Heart left ventricle (tissue), 16 donors: ENCODE measurements at regions of chr13 and their contacts with region 1.

Region 1: GRCh38 chr13:73293902-73294523 is 235.2 kb downstream of the KLF5 start:
- DNase-seq: no peak
- ATAC-seq: no peak
- H3K4me3 ChIP-seq: no peak overlapping the region
- H3K27ac ChIP-seq: no peak overlapping the region
- H3K4me1 ChIP-seq: no peaks in the 10 kb centered on the region
- H3K27me3 ChIP-seq: no peaks in the 10 kb centered on the region
- CTCF ChIP-seq: no peak
- POLR2A ChIP-seq: no peak

Region 2: GRCh38 chr13:73096181-73097117 is 197.6 kb before region 1 on chr13:
- intact Hi-C with region 1: no loop called
- DNase-seq: no peak
- ATAC-seq: no peak
- H3K4me3 ChIP-seq: no peak overlapping the region
- H3K27ac ChIP-seq: no peak overlapping the region
- H3K4me1 ChIP-seq: no peaks in the 10 kb centered on the region
- H3K27me3 ChIP-seq: no peaks in the 10 kb centered on the region
- CTCF ChIP-seq: no peak
- POLR2A ChIP-seq: no peak

Region 3: GRCh38 chr13:73351730-73352129 is 57.7 kb after region 1 on chr13:
- intact Hi-C with region 1: loop called in 1 of 10 experiments (anchors 2 kb)
- DNase-seq: no peak
- ATAC-seq: no peak
- H3K4me3 ChIP-seq: no peak overlapping the region
- H3K27ac ChIP-seq: no peak overlapping the region
- H3K4me1 ChIP-seq: no peaks in the 10 kb centered on the region
- H3K27me3 ChIP-seq: no peaks in the 10 kb centered on the region
- CTCF ChIP-seq: no peak
- POLR2A ChIP-seq: no peak